ENCODE measurements at regions of chrX and their contacts with region 1.

Region 1: DNA sequence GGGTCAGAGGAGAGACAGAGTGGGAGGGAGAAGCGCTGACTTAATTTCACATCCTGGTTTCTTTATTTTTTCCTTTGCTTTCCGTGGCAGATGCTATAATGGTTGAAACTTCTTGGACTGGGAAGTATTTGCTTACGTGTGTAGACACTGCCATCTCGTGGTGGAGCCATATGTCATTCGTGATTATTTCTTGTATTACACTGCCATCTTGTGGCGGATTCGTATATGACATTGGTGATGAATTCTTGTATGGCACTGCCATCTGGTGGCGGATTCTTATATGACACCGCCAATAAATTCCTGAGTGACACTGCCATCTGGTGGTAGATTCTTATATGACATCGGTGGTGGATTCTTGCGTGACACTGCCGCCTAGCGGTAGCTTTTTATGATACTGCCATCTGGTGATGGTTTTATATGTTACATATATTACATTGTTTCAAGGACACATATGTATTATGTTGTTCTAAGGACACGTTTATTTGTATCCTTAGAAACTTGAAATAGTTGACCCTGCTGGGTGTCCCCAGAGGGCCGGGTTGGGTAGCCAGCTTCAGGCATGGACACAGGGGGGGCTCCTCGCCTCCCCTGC is 37.3 kb upstream of the CLCN4 start:
- DNase-seq: peak; percentile 90
- H3K4me3 Mint-ChIP-seq: no peak overlapping the region
- H3K27ac Mint-ChIP-seq: no peak overlapping the region
- H3K4me1 Mint-ChIP-seq: peaks cover 12% of the 10 kb centered on the region
- H3K27me3 Mint-ChIP-seq: no peaks in the 10 kb centered on the region

Region 2: DNA sequence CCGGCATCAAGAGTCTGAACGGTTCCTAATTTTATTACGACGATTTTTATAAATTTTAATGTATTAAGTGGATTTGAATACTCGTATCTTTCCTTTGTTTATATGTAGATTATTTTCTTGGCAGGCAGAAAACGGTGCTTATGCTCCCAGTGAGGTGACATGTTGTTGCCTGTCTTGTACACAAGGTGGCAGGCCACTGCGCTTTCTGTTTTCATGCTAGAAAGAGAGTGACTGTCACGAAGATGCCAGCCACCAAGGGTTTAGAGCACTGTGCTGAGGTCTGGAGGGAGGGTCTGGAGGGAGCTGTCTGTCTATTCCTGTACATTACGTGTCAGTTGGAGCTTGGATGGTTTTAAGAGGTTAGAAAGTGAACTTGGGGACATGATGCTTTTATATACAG is 245.5 kb before region 1 on chrX:
- intact Hi-C with region 1: loop called (anchors 2 kb)
- DNase-seq: peak; percentile 74
- H3K4me3 Mint-ChIP-seq: no peak overlapping the region
- H3K27ac Mint-ChIP-seq: no peak overlapping the region
- H3K4me1 Mint-ChIP-seq: no peaks in the 10 kb centered on the region
- H3K27me3 Mint-ChIP-seq: peaks cover 15% of the 10 kb centered on the region

Region 3: DNA sequence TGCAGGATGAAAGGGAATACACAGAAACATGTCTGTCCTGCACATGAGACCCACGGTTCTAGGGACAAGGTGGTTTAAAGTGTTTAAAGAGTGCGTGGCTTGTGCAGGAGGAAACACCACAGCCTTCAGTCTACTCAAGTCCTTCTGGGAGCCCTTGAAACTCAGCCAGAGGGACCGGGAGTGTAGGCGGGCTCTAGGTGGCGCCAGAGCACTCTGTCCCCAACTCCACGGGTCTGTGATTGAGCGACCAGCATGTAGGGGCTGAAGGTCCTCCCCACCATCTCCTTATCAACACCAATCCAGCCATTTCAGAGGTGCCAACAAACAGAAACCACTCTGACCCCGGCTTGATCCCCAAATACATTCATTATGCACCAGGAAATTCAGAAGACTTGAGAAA is 234.3 kb before region 1 on chrX:
- intact Hi-C with region 1: loop called (anchors 1 kb)
- DNase-seq: peak; percentile 79
- H3K4me3 Mint-ChIP-seq: no peak overlapping the region
- H3K27ac Mint-ChIP-seq: no peak overlapping the region
- H3K4me1 Mint-ChIP-seq: no peaks in the 10 kb centered on the region
- H3K27me3 Mint-ChIP-seq: peaks cover 12% of the 10 kb centered on the region

Region 4: GRCh38 chrX:9995855-9996339 is 123.6 kb before region 1 on chrX:
- intact Hi-C with region 1: loop called (anchors 1 kb)
- DNase-seq: peak; percentile 92
- H3K4me3 Mint-ChIP-seq: no peak overlapping the region
- H3K27ac Mint-ChIP-seq: no peak overlapping the region
- H3K4me1 Mint-ChIP-seq: peaks cover 7% of the 10 kb centered on the region
- H3K27me3 Mint-ChIP-seq: peaks cover 2% of the 10 kb centered on the region

Region 5: DNA sequence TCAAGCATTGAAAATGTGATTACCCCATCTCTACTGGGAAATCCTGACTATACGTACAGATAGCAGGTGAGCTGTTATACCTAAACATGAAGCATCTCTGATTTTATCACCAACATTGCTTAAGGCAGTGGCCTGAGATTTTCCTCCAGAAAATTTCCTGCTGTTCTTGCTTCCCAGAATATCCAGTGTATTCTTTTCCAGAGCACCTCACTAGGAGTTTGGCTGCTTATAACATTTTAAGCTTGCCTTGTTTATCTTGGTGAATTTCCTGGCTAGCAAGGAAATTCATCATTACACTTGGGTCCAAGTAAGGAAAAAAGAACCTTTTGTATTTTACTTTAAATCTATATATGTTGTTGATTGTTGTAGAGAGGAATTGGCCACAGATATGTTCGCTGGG is 35.7 kb before region 1 on chrX:
- intact Hi-C with region 1: loop called (anchors 2 kb)
- DNase-seq: no peak
- H3K4me3 Mint-ChIP-seq: no peak overlapping the region
- H3K27ac Mint-ChIP-seq: no peak overlapping the region
- H3K4me1 Mint-ChIP-seq: peaks cover 30% of the 10 kb centered on the region
- H3K27me3 Mint-ChIP-seq: no peaks in the 10 kb centered on the region

Region 6: GRCh38 chrX:10186355-10186754 is 66.9 kb after region 1 on chrX:
- intact Hi-C with region 1: no loop called
- DNase-seq: no peak
- H3K4me3 Mint-ChIP-seq: no peak overlapping the region
- H3K27ac Mint-ChIP-seq: no peak overlapping the region
- H3K4me1 Mint-ChIP-seq: peaks cover 2% of the 10 kb centered on the region
- H3K27me3 Mint-ChIP-seq: peaks cover 1% of the 10 kb centered on the region

Measured in activated CD4-positive, alpha-beta T cell treated with anti-CD3 and anti-CD28 coated beads, Interleukin-2, amount 10 ng/mL, durations not matched to agents 24 days and 14 days (primary cell).